ENCODE measurements at regions of chr10 and their contacts with region 1.

Region 1: GRCh38 chr10:30534465-30535144 is 94.9 kb downstream of the LYZL2 start:
- H3K4me3 ChIP-seq: no peak overlapping the region
- H3K27ac ChIP-seq: no peak overlapping the region
- H3K4me1 ChIP-seq: no peaks in the 10 kb centered on the region
- CTCF ChIP-seq: peak; percentile 52; the same call in 1 of the 2 replicates

Region 2: GRCh38 chr10:30368065-30368718 is 166.4 kb before region 1 on chr10:
- CTCF ChIA-PET with region 1: no interaction called
- POLR2A ChIA-PET with region 1: no interaction called
- H3K4me3 ChIP-seq: no peak overlapping the region
- H3K27ac ChIP-seq: no peak overlapping the region
- H3K4me1 ChIP-seq: peaks cover 6% of the 10 kb centered on the region
- CTCF ChIP-seq: no peak

Region 3: GRCh38 chr10:30392564-30392990 is 142.0 kb before region 1 on chr10:
- CTCF ChIA-PET with region 1: interaction called, 12 read pairs
- POLR2A ChIA-PET with region 1: no interaction called
- H3K4me3 ChIP-seq: no peak overlapping the region
- H3K27ac ChIP-seq: no peak overlapping the region
- H3K4me1 ChIP-seq: no peaks in the 10 kb centered on the region
- CTCF ChIP-seq: peak; percentile 86

Region 4: GRCh38 chr10:30413996-30414576 is 120.5 kb before region 1 on chr10:
- CTCF ChIA-PET with region 1: interaction called, 25 read pairs
- POLR2A ChIA-PET with region 1: no interaction called
- H3K4me3 ChIP-seq: no peak overlapping the region
- H3K27ac ChIP-seq: no peak overlapping the region
- H3K4me1 ChIP-seq: no peaks in the 10 kb centered on the region
- CTCF ChIP-seq: peak; percentile 36; the same call in 1 of the 2 replicates

Region 5: GRCh38 chr10:30489346-30489745 is 45.3 kb before region 1 on chr10:
- CTCF ChIA-PET with region 1: interaction called, 10 read pairs
- POLR2A ChIA-PET with region 1: no interaction called
- H3K4me3 ChIP-seq: no peak overlapping the region
- H3K27ac ChIP-seq: no peak overlapping the region
- H3K4me1 ChIP-seq: no peaks in the 10 kb centered on the region
- CTCF ChIP-seq: no peak

Region 6: GRCh38 chr10:30557884-30558283 is 23.3 kb after region 1 on chr10:
- CTCF ChIA-PET with region 1: no interaction called
- POLR2A ChIA-PET with region 1: no interaction called
- H3K4me3 ChIP-seq: no peak overlapping the region
- H3K27ac ChIP-seq: no peak overlapping the region
- H3K4me1 ChIP-seq: no peaks in the 10 kb centered on the region
- CTCF ChIP-seq: no peak

Region 7: GRCh38 chr10:30656233-30656632 is 121.6 kb after region 1 on chr10:
- CTCF ChIA-PET with region 1: no interaction called
- POLR2A ChIA-PET with region 1: no interaction called
- H3K4me3 ChIP-seq: no peak overlapping the region
- H3K27ac ChIP-seq: no peak overlapping the region
- H3K4me1 ChIP-seq: no peaks in the 10 kb centered on the region
- CTCF ChIP-seq: no peak